ENCODE measurements at regions of chr11 and their contacts with region 1.

Region 1: GRCh38 chr11:43419460-43419859 is 60.7 kb downstream of the TTC17 start:
- DNase-seq: peak; percentile 79
- H3K4me3 ChIP-seq: no peak overlapping the region
- H3K27ac ChIP-seq: no peak overlapping the region
- H3K4me1 ChIP-seq: no peaks in the 10 kb centered on the region
- H3K27me3 ChIP-seq: no peaks in the 10 kb centered on the region
- CTCF ChIP-seq: peak; percentile 98

Region 2: GRCh38 chr11:43434893-43435292 is 15.4 kb after region 1 on chr11:
- CTCF ChIA-PET with region 1: no interaction called
- POLR2A ChIA-PET with region 1: no interaction called
- intact Hi-C with region 1: loop called (anchors 1 kb)
- DNase-seq: no peak
- H3K4me3 ChIP-seq: no peak overlapping the region
- H3K27ac ChIP-seq: no peak overlapping the region
- H3K4me1 ChIP-seq: no peaks in the 10 kb centered on the region
- H3K27me3 ChIP-seq: no peaks in the 10 kb centered on the region
- CTCF ChIP-seq: no peak

Region 3: GRCh38 chr11:43542750-43543712 is 123.6 kb after region 1 on chr11:
- CTCF ChIA-PET with region 1: no interaction called
- POLR2A ChIA-PET with region 1: no interaction called
- intact Hi-C with region 1: no loop called
- DNase-seq: no peak
- H3K4me3 ChIP-seq: no peak overlapping the region
- H3K27ac ChIP-seq: no peak overlapping the region
- H3K4me1 ChIP-seq: no peaks in the 10 kb centered on the region
- H3K27me3 ChIP-seq: peaks cover 34% of the 10 kb centered on the region
- CTCF ChIP-seq: no peak

Region 4: GRCh38 chr11:43573233-43573632 is 153.8 kb after region 1 on chr11:
- CTCF ChIA-PET with region 1: no interaction called
- POLR2A ChIA-PET with region 1: no interaction called
- intact Hi-C with region 1: loop called (anchors 5 kb)
- DNase-seq: peak; percentile 88
- H3K4me3 ChIP-seq: no peak overlapping the region
- H3K27ac ChIP-seq: no peak overlapping the region
- H3K4me1 ChIP-seq: peaks cover 25% of the 10 kb centered on the region
- H3K27me3 ChIP-seq: peaks cover 99% of the 10 kb centered on the region
- CTCF ChIP-seq: peak; percentile 99

Measured in A673 (cell line).